GM18951 (cell line): ENCODE measurements at regions of chr4 and their contacts with region 1.

Region 1: GRCh38 chr4:123649645-123650391 is 253.2 kb downstream of the SPRY1 start:
- POLR2A ChIP-seq: no peak

Region 2: DNA sequence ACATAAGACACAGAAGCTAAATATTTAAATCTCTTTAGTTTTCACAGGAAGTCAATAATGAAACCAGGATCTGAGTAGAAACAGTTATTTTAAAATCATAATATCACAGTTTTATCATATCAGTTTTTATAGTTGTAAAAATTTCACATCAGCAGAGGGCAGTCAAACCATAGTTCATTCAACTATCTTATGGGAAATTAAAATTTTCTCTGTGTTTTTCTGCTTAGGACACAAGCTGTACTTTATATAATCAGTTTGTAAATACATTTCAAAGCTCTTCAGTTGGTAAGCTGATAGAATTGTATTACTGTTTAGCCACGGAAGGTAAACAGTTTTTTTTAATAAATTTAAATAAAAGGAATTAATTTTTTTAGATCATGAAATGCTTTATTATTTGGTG is 522.6 kb before region 1 on chr4:
- in situ Hi-C with region 1: loop called (anchors 25 kb)
- POLR2A ChIP-seq: no peak